ENCODE measurements at regions of chrX and their contacts with region 1.

Region 1: DNA sequence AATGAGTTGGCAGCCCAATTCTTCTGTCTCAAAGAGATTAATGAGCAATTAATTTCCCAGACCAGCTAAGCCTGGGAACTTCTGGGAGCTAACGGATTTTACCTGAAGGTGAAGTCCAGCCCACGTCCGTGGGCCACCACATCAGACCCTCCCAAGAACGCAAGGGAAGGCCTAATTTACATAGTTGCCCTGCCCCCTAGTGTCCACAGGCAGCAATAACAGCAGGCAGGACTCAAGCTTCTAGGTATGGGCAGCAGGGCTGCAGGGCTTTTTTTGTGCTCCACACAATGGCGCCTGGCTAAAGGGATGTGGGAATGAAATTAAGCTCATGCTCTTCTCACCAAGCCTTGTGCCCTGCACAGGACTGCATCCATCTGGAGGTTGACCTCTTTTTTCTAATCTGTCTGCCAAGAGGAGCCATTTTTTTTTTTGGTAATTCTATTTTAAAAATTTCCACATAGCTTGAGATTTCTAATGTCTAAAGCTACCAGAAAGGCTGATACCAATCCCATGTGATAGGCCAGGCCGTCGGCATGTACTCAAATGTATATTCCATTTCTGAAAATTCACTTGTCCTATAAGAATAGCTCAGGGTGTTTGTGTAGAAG is 111.9 kb upstream of the TMEM164 start:
- DNase-seq: peak; percentile 58 to 60
- H3K4me3 ChIP-seq: no peak overlapping the region
- H3K4me3 Mint-ChIP-seq: no peak overlapping the region
- H3K27ac Mint-ChIP-seq: no peak overlapping the region
- H3K4me1 ChIP-seq: no peaks in the 10 kb centered on the region
- H3K4me1 Mint-ChIP-seq: no peaks in the 10 kb centered on the region
- H3K27me3 ChIP-seq: no peaks in the 10 kb centered on the region
- H3K27me3 Mint-ChIP-seq: no peaks in the 10 kb centered on the region
- CTCF ChIP-seq: peak; percentile 65 to 73

Region 2: DNA sequence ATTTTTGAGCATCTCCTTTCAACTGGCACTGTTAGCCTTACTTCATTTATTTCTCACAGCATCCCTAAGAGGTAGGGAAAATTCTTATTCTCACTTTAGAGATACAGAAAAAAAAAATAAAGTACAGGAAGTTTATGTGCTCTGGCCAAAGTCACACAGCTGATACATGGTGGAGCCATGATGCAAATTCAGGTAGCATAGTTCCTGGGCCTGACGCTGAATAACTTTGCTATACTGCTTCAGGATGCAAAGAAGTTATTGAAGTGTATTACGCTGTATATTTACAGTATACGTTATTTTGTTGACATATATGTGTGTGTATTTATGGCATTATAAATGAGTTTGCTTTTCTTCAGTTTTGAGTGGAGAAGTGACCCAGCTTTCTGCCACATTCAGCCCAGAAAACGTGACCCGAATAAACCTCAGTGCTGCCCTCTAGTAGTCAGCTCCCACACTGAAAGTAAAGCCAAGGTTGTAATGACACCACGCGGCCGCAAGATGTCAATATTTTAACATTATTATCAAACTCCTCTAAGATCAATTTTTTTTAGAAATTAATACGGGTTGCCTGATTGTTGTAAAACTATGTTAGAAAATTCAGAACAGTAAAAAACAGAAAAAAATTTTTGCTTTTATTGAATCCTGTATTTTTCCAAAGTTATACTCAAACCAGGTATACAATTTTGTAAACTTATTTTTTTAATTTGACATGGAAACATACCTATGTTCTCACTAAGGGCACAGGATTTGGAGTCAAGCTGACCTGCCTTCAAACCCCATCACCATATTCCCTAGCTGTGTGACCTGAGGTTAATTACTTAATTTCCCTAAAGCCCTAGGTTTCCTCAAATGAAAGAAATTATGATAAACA is 405.3 kb before region 1 on chrX:
- CTCF ChIA-PET with region 1: interaction called, 6 read pairs
- POLR2A ChIA-PET with region 1: no interaction called
- intact Hi-C with region 1: loop called (anchors 1 kb)
- DNase-seq: peak; percentile 46 to 52
- H3K4me3 ChIP-seq: no peak overlapping the region
- H3K4me3 Mint-ChIP-seq: no peak overlapping the region
- H3K27ac Mint-ChIP-seq: no peak overlapping the region
- H3K4me1 ChIP-seq: no peaks in the 10 kb centered on the region
- H3K4me1 Mint-ChIP-seq: no peaks in the 10 kb centered on the region
- H3K27me3 ChIP-seq: no peaks in the 10 kb centered on the region
- H3K27me3 Mint-ChIP-seq: peaks cover 8% of the 10 kb centered on the region
- CTCF ChIP-seq: peak; percentile 90 to 91

Measured in Caco-2 (cell line).